GM13976 (cell line): ENCODE measurements at regions of chr7 and their contacts with region 1.

Region 1: GRCh38 chr7:41003031-41003925 is 699.6 kb downstream of the INHBA start:
- DNase-seq: peak; percentile 15
- CTCF ChIP-seq: peak; percentile 67

Region 2: DNA sequence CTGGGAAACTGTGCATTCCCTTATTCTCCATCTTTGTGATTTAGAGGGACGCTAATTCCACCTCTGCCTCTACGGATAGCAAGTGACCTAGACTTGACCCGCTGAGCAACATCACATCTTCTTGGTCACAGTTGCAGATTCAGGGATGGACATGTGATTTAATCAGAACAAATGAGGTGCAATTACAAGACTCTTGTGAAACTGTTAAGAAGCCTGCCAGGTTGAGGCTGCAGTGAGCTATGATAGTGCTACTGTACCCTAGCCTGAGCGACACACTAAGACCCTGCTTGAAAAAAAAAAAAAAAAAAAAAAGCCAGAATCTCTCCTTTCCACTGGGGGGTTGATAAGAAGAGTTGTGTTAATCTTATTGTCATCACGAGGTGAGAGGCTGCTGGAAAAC is 883.3 kb before region 1 on chr7:
- in situ Hi-C with region 1: no loop called
- DNase-seq: no peak
- CTCF ChIP-seq: no peak

Region 3: GRCh38 chr7:41459623-41460261 is 456.5 kb after region 1 on chr7:
- in situ Hi-C with region 1: loop called (anchors 25 kb)
- DNase-seq: no peak
- CTCF ChIP-seq: no peak

Region 4: GRCh38 chr7:41705109-41705901 is 702.0 kb after region 1 on chr7:
- in situ Hi-C with region 1: loop called (anchors 25 kb)
- DNase-seq: peak; percentile 90
- CTCF ChIP-seq: peak; percentile 82